Endothelial cell of umbilical vein (primary cell): ENCODE measurements at regions of chr15 and their contacts with region 1.

Region 1: DNA sequence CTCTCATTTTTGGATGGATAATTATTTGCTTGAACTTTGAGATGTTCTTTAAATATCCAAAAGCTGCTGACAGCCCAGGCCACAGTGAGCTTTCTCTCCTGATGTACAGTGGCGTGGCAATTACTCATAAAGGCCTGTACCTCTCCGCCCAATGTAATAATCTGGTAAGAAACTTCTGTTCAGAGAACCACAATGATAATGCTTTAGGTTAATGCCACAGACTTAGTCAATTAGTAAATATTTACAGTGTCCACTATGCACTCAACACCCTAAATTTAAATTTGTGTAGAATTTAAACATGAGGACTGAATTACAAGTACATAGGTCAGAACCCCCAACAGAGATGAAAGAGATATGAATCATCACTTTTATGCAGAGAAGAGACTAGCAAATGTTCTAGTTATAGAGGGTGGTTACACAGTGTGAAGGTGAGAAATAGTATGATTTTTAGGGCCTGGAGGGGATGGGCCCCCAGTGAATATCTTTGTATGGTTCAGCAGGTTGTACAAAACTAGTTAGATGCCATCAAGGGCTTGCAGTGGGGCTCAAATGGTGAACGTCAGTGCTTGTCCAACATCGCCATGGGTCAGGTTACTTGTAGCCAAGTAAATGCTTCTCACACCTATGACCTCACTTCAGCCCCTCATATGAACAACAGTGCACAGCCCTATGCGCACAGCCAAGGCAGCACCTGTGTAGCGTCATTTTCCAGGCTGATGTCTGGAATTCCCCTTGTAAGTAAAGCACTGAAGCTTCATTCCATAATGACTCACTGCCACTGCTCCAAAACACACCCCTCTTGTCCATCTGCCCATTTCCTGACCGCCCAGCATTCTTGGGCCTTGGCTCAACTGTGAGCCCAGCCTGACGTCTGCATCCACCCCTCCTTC is 13.3 kb downstream of the ABHD2 start:
- DNase-seq: peak; percentile 91
- H3K4me3 ChIP-seq: no peak overlapping the region
- H3K27ac ChIP-seq: peak overlapping the region; percentile 94
- H3K4me1 ChIP-seq: peaks cover 57% of the 10 kb centered on the region
- H3K27me3 ChIP-seq: no peaks in the 10 kb centered on the region
- CTCF ChIP-seq: no peak
- POLR2A ChIP-seq: no peak

Region 2: DNA sequence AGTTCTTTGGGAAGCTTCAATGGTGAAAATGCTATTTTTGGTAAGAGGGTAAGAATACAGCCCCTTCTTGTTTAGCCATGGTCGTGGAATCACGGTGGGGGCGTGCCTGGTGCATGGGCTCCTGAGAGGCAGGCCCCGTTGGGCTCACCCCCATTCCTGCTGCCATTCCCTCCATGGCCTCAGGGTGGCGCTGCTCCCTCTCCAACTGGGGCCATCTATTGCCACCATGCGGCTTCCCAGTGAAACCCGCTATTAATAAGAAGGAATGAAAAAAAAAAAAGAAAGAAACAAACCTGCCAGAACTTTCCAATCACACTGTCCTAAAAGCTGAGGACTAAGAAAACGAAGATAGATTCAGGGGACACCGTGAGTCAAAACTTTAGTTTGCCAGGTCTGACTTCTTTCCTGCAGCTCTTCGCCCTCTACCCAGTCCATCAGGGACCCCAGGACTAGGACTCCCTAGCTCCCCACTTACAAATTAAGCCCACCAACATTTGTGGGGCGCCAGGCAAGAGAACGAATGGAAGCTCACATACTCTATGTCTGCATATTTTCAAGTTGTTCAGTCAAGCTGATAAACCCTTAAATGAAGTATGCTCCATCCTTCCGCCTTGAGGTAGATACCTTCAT is 43.9 kb before region 1 on chr15:
- CTCF ChIA-PET with region 1: interaction called, 10 read pairs
- POLR2A ChIA-PET with region 1: no interaction called
- dilution Hi-C with region 1: no loop called
- intact Hi-C with region 1: no loop called
- DNase-seq: peak; percentile 79
- H3K4me3 ChIP-seq: no peak overlapping the region
- H3K27ac ChIP-seq: no peak overlapping the region
- H3K4me1 ChIP-seq: no peaks in the 10 kb centered on the region
- H3K27me3 ChIP-seq: no peaks in the 10 kb centered on the region
- CTCF ChIP-seq: peak; percentile 95 to 99
- POLR2A ChIP-seq: no peak

Region 3: GRCh38 chr15:89070197-89071124 is 31.1 kb before region 1 on chr15:
- CTCF ChIA-PET with region 1: no interaction called
- POLR2A ChIA-PET with region 1: interaction called, 19 read pairs
- dilution Hi-C with region 1: no loop called
- intact Hi-C with region 1: no loop called
- DNase-seq: no peak
- H3K4me3 ChIP-seq: no peak overlapping the region
- H3K27ac ChIP-seq: no peak overlapping the region
- H3K4me1 ChIP-seq: no peaks in the 10 kb centered on the region
- H3K27me3 ChIP-seq: no peaks in the 10 kb centered on the region
- CTCF ChIP-seq: no peak
- POLR2A ChIP-seq: no peak

Region 4: DNA sequence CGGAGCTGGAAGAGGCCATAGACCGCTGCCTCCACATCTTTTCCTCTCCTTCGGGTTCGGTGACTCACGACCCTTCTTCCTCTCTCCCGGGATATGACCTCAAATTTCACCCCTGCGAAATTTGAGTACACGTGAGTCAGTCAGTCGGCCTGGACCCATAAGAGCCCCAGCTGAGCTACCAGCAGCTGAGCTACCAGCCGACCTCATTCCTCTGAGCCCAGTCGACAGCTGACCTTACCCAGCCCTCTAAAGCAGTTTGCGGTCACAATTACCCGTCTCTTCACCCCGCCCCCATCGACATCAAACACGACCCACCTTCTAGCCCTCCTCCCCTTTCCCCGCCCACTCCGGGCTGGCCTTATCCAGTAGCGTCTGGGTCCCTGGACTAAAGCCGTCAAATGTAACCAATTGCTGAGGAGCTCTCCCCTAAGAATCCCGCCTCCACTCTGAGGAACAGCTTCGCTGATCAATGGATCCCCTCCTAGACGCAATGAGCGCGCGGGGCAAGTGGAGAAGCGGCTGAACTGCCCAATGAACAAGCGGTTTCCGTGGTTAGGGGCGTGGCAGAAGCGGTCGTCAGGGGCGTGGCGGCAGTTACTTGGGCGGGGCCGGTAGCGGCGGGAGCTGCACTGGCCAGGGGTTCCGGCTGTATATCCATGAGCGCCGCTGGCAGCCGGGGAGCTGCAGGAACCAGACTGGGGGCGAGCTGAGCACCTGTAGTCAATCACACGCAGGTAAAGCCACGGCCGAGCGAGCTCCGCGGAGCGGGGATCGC is 13.5 kb before region 1 on chr15 and contains the start of gene ABHD2:
- CTCF ChIA-PET with region 1: interaction called, 31 read pairs
- POLR2A ChIA-PET with region 1: interaction called, 11 read pairs
- dilution Hi-C with region 1: no loop called
- intact Hi-C with region 1: loop called (anchors 1 kb)
- DNase-seq: peak; percentile 100
- H3K4me3 ChIP-seq: peak within 1 kb of the TSS; percentile 5 to 63 (median 36)
- H3K27ac ChIP-seq: peak within 1 kb of the TSS; percentile 71
- H3K4me1 ChIP-seq: peaks cover 42% of the 10 kb centered on the region
- H3K27me3 ChIP-seq: no peaks in the 10 kb centered on the region
- CTCF ChIP-seq: no peak
- POLR2A ChIP-seq: no peak
- total RNA-seq, gene ABHD2: 52.3 and 62.2 TPM in 2 replicates

Region 5: DNA sequence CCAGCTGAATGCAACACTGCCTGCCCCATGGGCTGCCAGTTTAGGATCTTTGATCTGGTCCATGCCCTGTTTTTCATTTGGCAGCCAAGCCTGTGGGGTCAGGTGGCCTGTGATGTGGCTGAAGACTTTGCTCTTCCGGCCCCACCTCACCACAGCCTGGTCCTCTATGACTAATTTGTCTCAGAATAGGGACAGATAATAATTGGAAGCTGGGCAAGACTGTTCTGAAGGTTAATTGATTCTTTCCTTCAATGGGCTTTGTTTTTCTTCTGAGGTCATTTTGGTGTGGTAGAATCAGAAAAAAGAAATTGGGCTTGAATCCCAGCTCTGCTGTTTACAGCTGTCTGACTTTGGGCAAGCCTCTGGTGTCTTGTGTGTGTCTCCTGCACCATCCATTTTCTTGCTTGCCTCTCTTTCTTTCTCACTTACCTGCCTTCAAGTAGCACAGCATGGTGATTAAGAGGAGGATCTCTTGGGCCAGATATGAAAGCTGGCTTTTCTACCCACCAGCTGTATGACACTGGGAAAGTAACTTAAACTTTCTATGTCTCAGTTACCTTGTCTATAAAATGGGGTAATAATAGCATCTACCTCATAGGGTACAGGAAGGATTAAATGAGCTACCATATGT is 10.9 kb after region 1 on chr15:
- CTCF ChIA-PET with region 1: interaction called, 12 read pairs
- POLR2A ChIA-PET with region 1: interaction called, 3 read pairs
- dilution Hi-C with region 1: no loop called
- intact Hi-C with region 1: loop called (anchors 1 kb)
- DNase-seq: peak; percentile 73
- H3K4me3 ChIP-seq: no peak overlapping the region
- H3K27ac ChIP-seq: peak overlapping the region; percentile 62
- H3K4me1 ChIP-seq: peaks cover 16% of the 10 kb centered on the region
- H3K27me3 ChIP-seq: no peaks in the 10 kb centered on the region
- CTCF ChIP-seq: no peak
- POLR2A ChIP-seq: no peak

Region 6: DNA sequence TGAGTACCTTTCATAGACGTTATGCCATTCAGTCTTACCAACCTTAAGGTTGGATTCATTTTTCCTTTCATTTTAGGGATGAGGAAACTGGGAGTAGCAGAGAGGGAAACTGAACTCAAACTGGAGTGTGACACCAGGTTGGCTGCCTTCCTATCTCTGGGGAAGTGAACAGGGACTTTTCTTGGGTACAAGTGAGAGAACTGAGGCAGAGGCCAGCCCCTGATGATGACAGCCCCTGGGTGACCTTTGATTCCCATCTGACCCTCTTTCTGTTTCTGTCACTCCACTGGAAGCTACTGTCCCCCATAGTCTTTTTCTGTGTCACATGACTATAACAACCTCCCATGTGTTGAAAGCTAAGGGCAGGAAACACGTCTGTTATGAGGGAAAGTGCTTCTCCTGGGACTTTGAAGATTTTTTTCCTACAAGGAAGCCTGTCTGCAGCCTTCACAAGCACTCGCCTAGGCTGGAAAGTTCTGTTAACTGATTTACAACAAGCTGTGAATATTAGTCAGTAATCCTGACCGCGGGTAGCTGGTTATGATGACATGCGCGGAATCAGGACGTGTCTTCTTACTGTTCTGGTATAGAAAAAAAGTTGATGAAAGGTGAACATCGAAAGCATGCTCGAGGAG is 18.1 kb after region 1 on chr15:
- CTCF ChIA-PET with region 1: interaction called, 12 read pairs
- POLR2A ChIA-PET with region 1: interaction called, 3 read pairs
- dilution Hi-C with region 1: no loop called
- intact Hi-C with region 1: loop called (anchors 1 kb)
- DNase-seq: peak; percentile 85
- H3K4me3 ChIP-seq: no peak overlapping the region
- H3K27ac ChIP-seq: peak overlapping the region; percentile 85
- H3K4me1 ChIP-seq: peaks cover 35% of the 10 kb centered on the region
- H3K27me3 ChIP-seq: no peaks in the 10 kb centered on the region
- CTCF ChIP-seq: no peak
- POLR2A ChIP-seq: no peak

Region 7: GRCh38 chr15:89129123-89129815 is 27.7 kb after region 1 on chr15:
- CTCF ChIA-PET with region 1: interaction called, 12 read pairs
- POLR2A ChIA-PET with region 1: interaction called, 3 read pairs
- dilution Hi-C with region 1: no loop called
- intact Hi-C with region 1: loop called (anchors 1 kb)
- DNase-seq: peak; percentile 62
- H3K4me3 ChIP-seq: no peak overlapping the region
- H3K27ac ChIP-seq: peak overlapping the region; percentile 52
- H3K4me1 ChIP-seq: peaks cover 41% of the 10 kb centered on the region
- H3K27me3 ChIP-seq: no peaks in the 10 kb centered on the region
- CTCF ChIP-seq: peak; percentile 67 to 78
- POLR2A ChIP-seq: no peak